H1 (cell line): ENCODE measurements at regions of chr11 and their contacts with region 1.

Region 1: GRCh38 chr11:46916286-46917108 is 1.9 kb downstream of the LRP4 start:
- DNase-seq: peak in 1 of 2 experiments; percentile 69
- H3K4me3 ChIP-seq: peak overlapping the region; percentile 53 to 74 (median 62)
- H3K27ac ChIP-seq: no peak overlapping the region
- H3K4me1 ChIP-seq: peaks cover 18 to 26% (median 21%) of the 10 kb centered on the region in 4 experiments
- H3K27me3 ChIP-seq: peaks cover 0 to 15% (median 5%) of the 10 kb centered on the region in 4 experiments; a peak in 5 of 7 replicates
- CTCF ChIP-seq: no peak
- EP300 ChIP-seq: no peak
- POLR2A ChIP-seq: no peak
- RAD21 ChIP-seq: no peak

Region 2: DNA sequence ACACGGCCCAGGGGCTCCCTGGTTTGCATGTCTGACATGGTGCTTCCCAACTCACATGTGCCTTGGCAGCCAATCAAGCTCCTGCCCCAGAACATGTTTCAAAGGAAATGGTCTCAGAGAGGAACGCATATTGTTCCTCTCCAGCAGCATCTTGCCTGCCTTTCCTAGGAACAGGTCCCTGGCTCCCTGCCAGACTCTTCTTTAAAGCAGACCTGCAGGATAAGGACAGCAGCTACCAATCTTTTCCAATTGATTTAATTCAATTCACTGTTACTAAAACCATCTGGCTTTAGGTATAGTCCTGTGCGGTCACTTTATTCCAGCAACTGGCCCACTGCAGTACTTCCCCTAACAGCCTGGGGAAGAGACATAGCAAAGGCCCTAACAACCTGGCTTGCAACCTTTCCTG is 402.6 kb before region 1 on chr11:
- CTCF ChIA-PET with region 1: no interaction called
- POLR2A ChIA-PET with region 1: no interaction called
- DNase-seq: no peak
- H3K4me3 ChIP-seq: no peak overlapping the region
- H3K27ac ChIP-seq: no peak overlapping the region
- H3K4me1 ChIP-seq: peaks cover 4 to 10% (median 6%) of the 10 kb centered on the region in 4 experiments; a peak in 3 of 7 replicates
- H3K27me3 ChIP-seq: no peaks in the 10 kb centered on the region
- CTCF ChIP-seq: no peak
- EP300 ChIP-seq: no peak
- POLR2A ChIP-seq: no peak
- RAD21 ChIP-seq: no peak

Region 3: DNA sequence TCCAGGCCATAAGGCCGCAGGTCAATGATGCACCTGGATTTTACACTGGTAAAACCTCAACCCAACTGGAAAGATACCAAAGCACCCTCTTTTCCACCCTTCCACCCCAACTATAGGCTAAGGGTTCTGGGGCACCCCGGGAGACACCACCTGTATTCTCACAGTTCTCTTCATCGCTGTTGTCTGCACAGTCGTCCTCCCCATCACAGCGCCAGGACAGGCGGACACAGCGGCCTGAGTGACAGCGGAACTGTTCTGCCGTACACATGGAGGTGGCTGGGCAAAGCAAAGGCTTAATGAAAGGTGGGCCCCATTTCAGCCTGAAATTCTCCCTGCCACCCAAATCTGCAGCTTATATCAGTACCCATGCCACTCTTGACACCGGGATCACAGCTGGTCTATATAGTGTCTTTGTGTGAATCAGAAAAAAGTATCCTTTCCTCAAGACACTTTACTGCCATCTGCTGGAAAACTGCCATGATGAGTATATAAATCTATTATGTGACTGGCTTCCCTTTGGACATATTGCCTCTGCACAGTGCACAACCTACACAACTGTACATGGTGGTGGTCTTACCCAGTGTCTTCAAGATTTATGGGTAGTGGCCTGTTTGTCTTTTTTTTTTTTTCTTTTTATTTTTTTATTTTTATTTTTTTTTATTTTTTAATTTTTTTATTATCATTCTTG is 19.6 kb before region 1 on chr11:
- CTCF ChIA-PET with region 1: interaction called, 13 read pairs
- POLR2A ChIA-PET with region 1: interaction called, 8 read pairs
- DNase-seq: no peak
- H3K4me3 ChIP-seq: no peak overlapping the region
- H3K27ac ChIP-seq: no peak overlapping the region
- H3K4me1 ChIP-seq: 0 out of 7 replicates have a peak, but pooled peaks cover 0 to 2% (median 0%) of the 10 kb centered on the region in 4 experiments
- H3K27me3 ChIP-seq: no peaks in the 10 kb centered on the region
- CTCF ChIP-seq: peak in 1 of 3 experiments; percentile 45; a peak in 2 of 4 replicates
- EP300 ChIP-seq: no peak
- POLR2A ChIP-seq: no peak
- RAD21 ChIP-seq: peak in 1 of 2 experiments; percentile 40; a peak in 2 of 4 replicates

Region 4: DNA sequence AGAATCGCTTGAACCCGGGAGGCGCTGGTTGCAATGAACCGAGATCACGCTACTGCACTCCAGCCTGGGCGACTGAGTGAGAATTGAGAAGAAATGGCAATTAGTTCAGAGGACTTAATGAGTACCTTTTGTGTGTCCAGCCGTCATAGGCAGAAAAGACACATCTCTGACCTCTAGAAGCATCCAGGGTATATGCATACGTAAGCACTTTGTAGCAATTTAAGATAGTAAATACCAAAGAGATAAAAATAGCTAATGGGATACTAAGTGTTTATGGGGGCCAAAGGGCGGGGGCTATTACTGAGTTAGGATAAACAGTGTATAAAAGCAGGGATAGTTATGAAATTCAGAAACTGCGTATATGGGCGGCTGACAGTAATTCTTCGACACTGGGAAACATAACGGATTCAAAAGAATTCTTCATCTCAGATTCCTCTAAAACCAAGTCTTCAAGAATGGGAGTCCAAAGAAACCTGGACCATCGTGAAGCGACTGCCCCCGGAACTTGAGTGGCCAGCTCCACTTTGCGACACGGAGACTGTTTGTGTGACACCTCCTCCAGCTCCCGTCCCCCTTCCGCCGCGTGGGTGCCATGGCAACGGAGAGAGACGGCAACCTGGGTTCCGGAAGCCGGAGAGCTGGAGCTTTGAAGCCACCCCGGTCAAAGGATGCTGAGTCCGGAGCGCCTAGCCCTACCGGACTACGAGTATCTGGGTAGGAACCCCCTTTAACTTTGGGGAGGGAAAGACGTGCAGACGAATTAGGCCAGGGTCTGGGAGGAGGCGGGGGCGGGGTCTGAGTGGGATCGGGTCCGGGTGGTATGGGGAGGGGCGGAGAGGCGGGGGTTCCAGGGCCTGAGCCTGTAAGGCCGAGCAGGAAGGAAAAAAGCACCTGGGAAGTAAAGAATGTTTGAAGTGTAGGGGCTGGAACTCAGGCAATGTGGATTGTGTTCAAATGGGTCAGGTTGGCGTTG is 19.9 kb after region 1 on chr11 and contains the start of gene CSTPP1:
- CTCF ChIA-PET with region 1: interaction called, 19 read pairs
- POLR2A ChIA-PET with region 1: interaction called, 7 read pairs
- DNase-seq: peak; percentile 71 to 96
- H3K4me3 ChIP-seq: peak within 1 kb of the TSS; percentile 61 to 81 (median 76)
- H3K27ac ChIP-seq: 0 out of 2 replicates have a peak within 1 kb of the TSS, but pooled peaks have one; percentile 23
- H3K4me1 ChIP-seq: peaks cover 0 to 3% (median 0%) of the 10 kb centered on the region in 4 experiments; a peak in 2 of 7 replicates
- H3K27me3 ChIP-seq: no peaks in the 10 kb centered on the region
- CTCF ChIP-seq: no peak
- EP300 ChIP-seq: no peak
- POLR2A ChIP-seq: no peak
- RAD21 ChIP-seq: peak; percentile 2 to 5; a peak in 1 of 4 replicates
- total RNA-seq, gene CSTPP1: 24.2 and 26.2 TPM in 2 replicates

Region 5: GRCh38 chr11:46948378-46949131 is 32.1 kb after region 1 on chr11:
- CTCF ChIA-PET with region 1: interaction called, 11 read pairs
- POLR2A ChIA-PET with region 1: interaction called, 4 read pairs
- DNase-seq: no peak
- H3K4me3 ChIP-seq: no peak overlapping the region
- H3K27ac ChIP-seq: no peak overlapping the region
- H3K4me1 ChIP-seq: no peaks in the 10 kb centered on the region
- H3K27me3 ChIP-seq: no peaks in the 10 kb centered on the region
- CTCF ChIP-seq: no peak
- EP300 ChIP-seq: no peak
- POLR2A ChIP-seq: no peak
- RAD21 ChIP-seq: no peak

Region 6: GRCh38 chr11:47161134-47161854 is 244.8 kb after region 1 on chr11:
- CTCF ChIA-PET with region 1: interaction called, 81 read pairs
- POLR2A ChIA-PET with region 1: interaction called, 5 read pairs
- DNase-seq: peak in 1 of 2 experiments; percentile 90
- H3K4me3 ChIP-seq: no peak overlapping the region
- H3K27ac ChIP-seq: no peak overlapping the region
- H3K4me1 ChIP-seq: no peaks in the 10 kb centered on the region
- H3K27me3 ChIP-seq: no peaks in the 10 kb centered on the region
- CTCF ChIP-seq: peak; percentile 91 to 96 (median 91)
- EP300 ChIP-seq: no peak
- POLR2A ChIP-seq: no peak; a peak in 1 of 3 replicates
- RAD21 ChIP-seq: peak; percentile 88 to 93

Region 7: DNA sequence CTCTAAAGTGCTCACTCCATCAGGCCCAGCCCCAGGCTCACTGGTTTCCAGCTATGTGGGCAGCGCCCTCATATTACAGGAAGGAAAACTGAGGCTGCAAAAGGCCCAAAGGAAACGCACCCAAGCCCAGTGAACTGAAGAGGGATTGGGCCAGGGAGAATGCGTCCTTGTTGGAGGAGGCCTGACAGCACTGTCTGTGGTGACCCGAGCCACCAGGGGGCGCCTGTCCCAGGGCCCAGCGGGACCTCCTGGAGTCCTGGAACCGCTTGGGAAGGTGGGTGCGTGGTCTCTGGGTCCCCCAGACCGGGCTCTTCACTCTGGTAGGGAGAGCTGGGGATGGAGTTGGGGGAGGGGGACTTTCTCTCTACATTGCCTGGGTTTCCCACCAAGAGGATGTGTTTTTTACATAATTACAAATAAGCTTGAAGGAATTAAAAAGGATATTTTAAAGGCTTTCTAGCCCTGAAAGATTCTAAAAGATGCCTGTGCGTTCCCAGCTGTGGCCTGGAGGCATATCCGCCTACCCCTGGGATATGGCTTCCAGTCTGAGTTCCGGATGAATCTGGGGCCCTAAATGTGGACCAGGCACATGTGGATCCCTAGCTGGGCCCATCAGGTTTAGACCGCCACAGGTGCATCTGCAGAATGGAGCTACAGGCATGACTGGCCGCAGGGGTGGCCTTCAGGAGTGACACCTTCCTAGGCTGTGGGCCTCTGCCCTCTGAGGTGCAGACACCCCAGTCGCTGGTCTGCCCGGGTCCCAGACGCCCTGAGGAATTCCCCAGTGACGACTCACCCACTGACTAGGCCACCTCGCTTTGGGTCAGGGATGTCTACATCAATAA is 457.6 kb after region 1 on chr11:
- CTCF ChIA-PET with region 1: no interaction called
- POLR2A ChIA-PET with region 1: no interaction called
- DNase-seq: peak; percentile 49 to 93
- H3K4me3 ChIP-seq: no peak overlapping the region
- H3K27ac ChIP-seq: no peak overlapping the region
- H3K4me1 ChIP-seq: peaks cover 0 to 5% (median 2%) of the 10 kb centered on the region in 4 experiments; a peak in 5 of 7 replicates
- H3K27me3 ChIP-seq: no peaks in the 10 kb centered on the region
- CTCF ChIP-seq: peak; percentile 90 to 97 (median 94)
- EP300 ChIP-seq: no peak
- POLR2A ChIP-seq: no peak
- RAD21 ChIP-seq: peak; percentile 60 to 73